Activated CD4-positive, alpha-beta memory T cell treated with anti-CD3 and anti-CD28 coated beads for 36 hours (primary cell): ENCODE measurements at regions of chr15 and their contacts with region 1.

Region 1: GRCh38 chr15:59528965-59529402 is 82.6 kb upstream of the GCNT3 start:
- DNase-seq: peak; percentile 77
- H3K4me3 Mint-ChIP-seq: no peak overlapping the region
- H3K27ac Mint-ChIP-seq: no peak overlapping the region
- H3K4me1 Mint-ChIP-seq: peaks cover 9% of the 10 kb centered on the region
- H3K27me3 Mint-ChIP-seq: peaks cover 13% of the 10 kb centered on the region

Region 2: DNA sequence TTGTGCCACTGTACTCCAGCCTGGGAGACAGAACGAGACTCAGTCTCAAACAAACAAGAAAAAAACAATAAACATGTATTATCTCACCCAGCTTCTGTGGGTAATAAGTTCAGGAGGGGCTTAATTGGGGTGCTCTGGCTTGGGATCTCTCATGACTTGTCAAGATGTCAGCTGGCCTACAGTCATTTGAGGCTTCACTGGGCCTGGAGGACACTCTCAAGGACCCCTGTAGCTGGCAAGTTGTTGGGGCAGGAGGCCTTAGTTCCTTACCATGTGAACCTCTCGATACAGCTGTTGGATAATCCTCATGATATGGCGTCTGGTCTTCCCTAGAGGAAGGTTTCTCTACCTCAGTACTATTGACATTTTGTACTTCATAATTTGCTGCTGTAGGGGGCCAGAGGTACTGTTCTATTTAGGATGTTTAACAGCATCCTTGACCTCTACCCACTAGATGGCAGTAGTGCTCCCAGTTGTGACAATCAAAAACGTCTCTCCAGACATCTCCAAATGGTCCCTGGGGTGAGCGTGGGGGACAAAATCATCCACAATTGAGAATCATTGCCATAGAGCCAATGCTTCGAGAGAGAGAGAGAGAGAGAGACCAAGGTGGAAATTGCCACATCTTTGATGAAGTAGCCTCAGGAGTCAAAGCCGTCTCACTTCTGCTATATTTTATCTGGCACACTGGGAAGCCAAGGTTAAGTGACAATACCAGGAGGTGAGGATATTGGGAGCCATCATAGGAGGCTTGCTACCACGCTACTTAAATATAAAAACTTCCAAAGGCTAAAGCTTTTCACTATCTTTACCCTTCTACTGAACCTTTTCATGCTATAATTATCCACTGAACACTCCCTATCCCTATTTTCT is 571.6 kb before region 1 on chr15:
- CTCF ChIA-PET with region 1: interaction called, 23 read pairs
- POLR2A ChIA-PET with region 1: no interaction called
- intact Hi-C with region 1: no loop called
- DNase-seq: peak; percentile 58
- H3K4me3 Mint-ChIP-seq: no peak overlapping the region
- H3K27ac Mint-ChIP-seq: peak overlapping the region; percentile 29
- H3K4me1 Mint-ChIP-seq: peaks cover 12% of the 10 kb centered on the region
- H3K27me3 Mint-ChIP-seq: no peaks in the 10 kb centered on the region

Region 3: DNA sequence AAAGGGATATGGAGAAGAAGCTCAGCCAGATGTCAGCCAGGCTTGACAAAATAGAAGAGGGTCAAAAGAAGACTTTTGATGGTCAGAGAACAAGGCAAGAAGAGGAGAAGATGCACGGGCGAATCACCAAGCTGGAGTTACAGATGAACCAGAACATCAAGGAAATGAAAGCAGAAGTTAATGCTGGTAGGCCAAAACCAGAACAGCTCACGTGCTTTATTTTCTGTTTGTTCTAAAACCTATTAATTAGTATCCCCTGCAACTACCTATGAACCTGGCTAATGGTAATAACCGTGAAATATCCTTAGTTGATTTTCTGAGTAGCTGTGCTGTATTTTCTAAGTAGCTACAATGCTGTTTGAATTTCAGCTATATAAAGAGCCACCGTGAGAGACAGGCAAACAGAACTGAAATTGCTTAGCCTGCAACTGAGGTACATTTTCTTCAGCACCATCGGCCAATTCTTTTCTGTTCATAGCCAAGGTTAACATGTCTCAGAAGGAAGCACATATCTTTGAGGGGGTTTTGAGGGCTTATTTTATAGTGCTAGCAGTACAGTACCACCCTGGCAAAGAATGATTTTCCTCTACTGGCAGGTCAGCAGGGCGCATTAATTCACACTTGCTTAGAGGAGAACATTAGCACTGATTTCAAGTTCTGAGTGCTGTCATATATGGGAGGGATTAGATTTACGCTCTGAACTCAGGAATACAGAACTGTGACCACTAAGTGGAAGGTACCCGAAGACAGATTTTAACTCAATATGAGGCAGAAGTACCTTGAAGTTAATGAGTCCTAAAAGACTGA is 12.1 kb before region 1 on chr15:
- CTCF ChIA-PET with region 1: interaction called, 47 read pairs
- POLR2A ChIA-PET with region 1: no interaction called
- intact Hi-C with region 1: no loop called
- DNase-seq: no peak
- H3K4me3 Mint-ChIP-seq: no peak overlapping the region
- H3K27ac Mint-ChIP-seq: no peak overlapping the region
- H3K4me1 Mint-ChIP-seq: no peaks in the 10 kb centered on the region
- H3K27me3 Mint-ChIP-seq: peaks cover 4% of the 10 kb centered on the region

Region 4: DNA sequence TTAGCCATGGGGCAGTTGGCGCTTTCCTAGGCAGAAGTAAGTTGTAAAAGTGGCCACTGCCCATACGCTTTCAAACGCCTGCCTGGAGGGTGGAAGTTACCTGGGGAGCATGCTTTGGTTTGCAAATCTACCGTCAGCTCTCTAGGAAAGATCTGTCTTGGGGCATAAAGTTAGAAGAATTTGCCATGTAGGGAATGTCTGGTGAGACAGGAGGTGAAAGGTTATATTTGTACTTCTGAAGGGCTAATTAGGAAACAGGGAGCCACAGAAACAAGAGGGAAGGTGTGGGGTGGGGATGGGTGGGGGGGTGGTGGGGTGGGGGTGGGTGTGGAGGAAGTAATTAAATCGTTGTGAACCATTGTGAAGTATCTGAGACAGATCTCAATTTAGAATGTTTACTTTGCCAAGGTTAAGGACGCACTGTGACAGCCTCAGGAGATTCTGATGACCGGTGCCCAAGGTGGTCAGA is 20.4 kb after region 1 on chr15:
- CTCF ChIA-PET with region 1: interaction called, 15 read pairs
- POLR2A ChIA-PET with region 1: no interaction called
- intact Hi-C with region 1: no loop called
- DNase-seq: no peak
- H3K4me3 Mint-ChIP-seq: no peak overlapping the region
- H3K27ac Mint-ChIP-seq: no peak overlapping the region
- H3K4me1 Mint-ChIP-seq: no peaks in the 10 kb centered on the region
- H3K27me3 Mint-ChIP-seq: peaks cover 3% of the 10 kb centered on the region

Region 5: GRCh38 chr15:59632714-59633113 is 103.7 kb after region 1 on chr15:
- CTCF ChIA-PET with region 1: interaction called, 12 read pairs
- POLR2A ChIA-PET with region 1: no interaction called
- intact Hi-C with region 1: no loop called
- DNase-seq: no peak
- H3K4me3 Mint-ChIP-seq: no peak overlapping the region
- H3K27ac Mint-ChIP-seq: no peak overlapping the region
- H3K4me1 Mint-ChIP-seq: no peaks in the 10 kb centered on the region
- H3K27me3 Mint-ChIP-seq: no peaks in the 10 kb centered on the region